ENCODE measurements at regions of chr2 and their contacts with region 1.

Region 1: DNA sequence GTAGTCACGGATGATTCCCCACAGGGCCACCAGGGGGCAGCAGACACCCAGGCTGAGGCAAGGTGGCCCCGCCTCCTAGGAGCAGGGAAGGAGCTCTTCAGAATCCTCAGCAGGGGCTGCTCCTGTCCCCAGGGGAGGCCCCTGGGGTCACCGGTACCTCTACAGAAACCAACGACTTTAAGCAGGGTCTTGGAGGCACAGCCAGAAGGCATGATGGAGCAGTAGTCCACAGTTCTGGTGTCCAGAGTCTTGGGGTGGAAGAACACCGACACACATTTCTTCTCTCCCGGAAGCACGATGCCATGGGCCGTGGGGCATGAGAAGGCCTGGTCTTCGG is 11.5 kb downstream of the CFAP65 start:
- DNase-seq: no peak
- ATAC-seq: peak; percentile 97
- H3K4me3 ChIP-seq: no peak overlapping the region
- H3K27ac ChIP-seq: no peak overlapping the region
- H3K4me1 ChIP-seq: no peaks in the 10 kb centered on the region
- H3K27me3 ChIP-seq: no peaks in the 10 kb centered on the region; a peak in 2 of 4 replicates
- CTCF ChIP-seq: peak; percentile 92 to 98 (median 93)
- EP300 ChIP-seq: no peak
- POLR2A ChIP-seq: no peak
- RAD21 ChIP-seq: peak; percentile 82

Region 2: DNA sequence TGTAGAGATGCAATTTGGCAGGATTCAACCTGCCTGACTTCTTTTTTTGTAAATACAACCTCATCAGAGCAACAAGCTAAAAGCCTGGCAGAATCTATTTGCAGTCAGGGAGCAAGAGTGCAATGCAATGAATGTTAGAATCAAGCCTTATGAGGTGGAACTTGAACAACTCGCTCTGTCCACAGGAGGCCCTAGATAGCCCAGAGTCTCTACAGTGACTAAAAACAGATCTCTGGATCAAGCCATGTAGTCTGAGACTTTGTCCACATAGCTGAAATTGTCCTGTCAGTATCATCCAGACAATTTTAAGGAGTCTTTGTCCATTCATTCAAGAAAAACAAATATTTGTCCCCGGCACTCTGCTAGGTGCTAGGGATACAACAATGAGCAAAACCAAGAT is 102.4 kb before region 1 on chr2:
- CTCF ChIA-PET with region 1: no interaction called
- POLR2A ChIA-PET with region 1: no interaction called
- RAD21 ChIA-PET with region 1: no interaction called
- SMC1A ChIA-PET with region 1: no interaction called
- in situ Hi-C with region 1: no loop called
- intact Hi-C with region 1: no loop called
- DNase-seq: no peak
- ATAC-seq: no peak
- H3K4me3 ChIP-seq: no peak overlapping the region
- H3K27ac ChIP-seq: no peak overlapping the region
- H3K4me1 ChIP-seq: no peaks in the 10 kb centered on the region
- H3K27me3 ChIP-seq: no peaks in the 10 kb centered on the region
- CTCF ChIP-seq: no peak
- EP300 ChIP-seq: no peak
- POLR2A ChIP-seq: no peak
- RAD21 ChIP-seq: no peak

Region 3: DNA sequence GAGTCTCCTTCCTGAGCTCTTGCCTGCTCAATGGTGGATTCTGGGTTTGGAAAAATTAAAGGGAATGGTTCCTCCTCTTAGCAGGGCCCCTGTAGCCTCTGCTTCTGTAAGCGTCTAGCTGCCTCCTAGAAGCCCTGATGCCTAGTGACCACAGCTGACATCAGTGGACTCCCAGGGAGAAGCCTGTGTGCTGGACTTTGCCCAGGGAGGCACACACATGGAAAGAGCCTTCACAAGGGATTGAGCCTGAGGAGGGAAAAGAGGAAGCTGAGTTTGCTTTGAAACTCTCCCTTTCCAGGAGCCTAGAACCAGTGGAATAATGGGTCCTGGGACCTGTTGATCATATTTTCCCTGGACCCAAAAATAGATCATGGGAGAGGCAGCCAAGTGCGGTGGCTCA is 13.0 kb after region 1 on chr2:
- CTCF ChIA-PET with region 1: interaction called, 16 read pairs
- POLR2A ChIA-PET with region 1: no interaction called
- RAD21 ChIA-PET with region 1: no interaction called
- SMC1A ChIA-PET with region 1: no interaction called
- in situ Hi-C with region 1: no loop called
- intact Hi-C with region 1: no loop called
- DNase-seq: no peak
- ATAC-seq: no peak
- H3K4me3 ChIP-seq: no peak overlapping the region
- H3K27ac ChIP-seq: no peak overlapping the region
- H3K4me1 ChIP-seq: no peaks in the 10 kb centered on the region
- H3K27me3 ChIP-seq: peaks cover 0 to 13% of the 10 kb centered on the region in 2 experiments; a peak in 2 of 4 replicates
- CTCF ChIP-seq: no peak
- EP300 ChIP-seq: no peak
- POLR2A ChIP-seq: no peak
- RAD21 ChIP-seq: no peak

Region 4: GRCh38 chr2:219079417-219079816 is 49.6 kb after region 1 on chr2:
- CTCF ChIA-PET with region 1: interaction called, 10 read pairs
- POLR2A ChIA-PET with region 1: no interaction called
- RAD21 ChIA-PET with region 1: no interaction called
- SMC1A ChIA-PET with region 1: no interaction called
- in situ Hi-C with region 1: no loop called
- intact Hi-C with region 1: no loop called
- DNase-seq: no peak
- ATAC-seq: no peak
- H3K4me3 ChIP-seq: no peak overlapping the region
- H3K27ac ChIP-seq: no peak overlapping the region
- H3K4me1 ChIP-seq: peaks cover 6% of the 10 kb centered on the region
- H3K27me3 ChIP-seq: no peaks in the 10 kb centered on the region
- CTCF ChIP-seq: no peak
- EP300 ChIP-seq: no peak
- POLR2A ChIP-seq: no peak
- RAD21 ChIP-seq: no peak

Region 5: DNA sequence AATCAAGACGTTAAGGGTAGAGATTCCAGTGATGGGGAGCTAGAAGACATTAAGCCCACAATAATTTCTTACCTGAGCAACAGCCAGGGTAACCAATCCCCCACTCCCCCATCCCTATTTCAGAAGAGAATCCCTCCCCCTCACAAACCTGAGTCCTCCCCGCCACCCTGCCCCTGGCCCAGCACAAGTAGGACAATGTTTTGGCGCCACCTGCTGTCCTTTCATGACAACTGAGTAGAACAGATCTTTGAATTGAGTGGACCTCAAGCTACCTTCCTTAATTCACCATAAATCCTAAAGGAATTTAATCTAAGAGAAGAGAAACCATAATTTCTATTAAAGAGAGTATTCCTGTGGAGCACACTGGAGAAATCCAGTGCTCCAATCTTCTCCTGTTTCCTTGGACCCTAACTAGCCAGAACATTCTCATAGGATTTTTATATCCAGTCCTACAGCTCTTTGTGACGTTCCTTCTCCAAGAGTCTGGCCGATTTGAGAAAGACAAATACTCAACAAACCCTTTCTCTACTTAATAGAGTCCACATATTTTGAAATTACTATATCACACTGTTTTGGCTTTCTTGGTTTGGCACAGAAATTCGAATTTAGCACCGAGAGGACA is 89.7 kb after region 1 on chr2:
- CTCF ChIA-PET with region 1: interaction called, 50 read pairs
- POLR2A ChIA-PET with region 1: no interaction called
- RAD21 ChIA-PET with region 1: interaction called, 17 read pairs
- SMC1A ChIA-PET with region 1: interaction called, 13 read pairs
- in situ Hi-C with region 1: no loop called
- intact Hi-C with region 1: loop called (anchors 1 kb)
- DNase-seq: peak; percentile 5
- ATAC-seq: peak; percentile 89
- H3K4me3 ChIP-seq: no peak overlapping the region
- H3K27ac ChIP-seq: no peak overlapping the region
- H3K4me1 ChIP-seq: no peaks in the 10 kb centered on the region
- H3K27me3 ChIP-seq: no peaks in the 10 kb centered on the region
- CTCF ChIP-seq: peak; percentile 68 to 74 (median 71)
- EP300 ChIP-seq: no peak
- POLR2A ChIP-seq: no peak
- RAD21 ChIP-seq: peak; percentile 90

Region 6: DNA sequence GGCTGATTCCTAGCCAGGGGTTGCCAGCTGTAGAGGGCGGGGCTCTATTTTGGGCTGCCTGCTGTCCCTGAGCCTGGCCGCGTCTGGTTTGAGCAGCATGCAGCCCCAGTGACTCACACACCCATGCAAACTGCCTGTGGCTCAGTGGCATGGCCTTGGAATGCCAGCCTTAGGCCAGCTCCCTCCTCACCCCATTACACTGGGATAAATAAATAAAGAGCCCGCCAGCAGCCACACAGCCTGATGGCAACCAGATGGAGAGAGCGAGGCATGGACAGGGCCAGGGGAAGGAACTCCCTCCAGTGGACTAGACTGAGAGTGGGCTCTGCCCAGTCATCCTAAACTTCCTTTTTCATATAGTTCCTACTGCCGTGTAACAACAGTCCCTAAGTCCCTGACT is 112.5 kb after region 1 on chr2:
- CTCF ChIA-PET with region 1: interaction called, 10 read pairs
- POLR2A ChIA-PET with region 1: no interaction called
- RAD21 ChIA-PET with region 1: interaction called, 4 read pairs
- SMC1A ChIA-PET with region 1: no interaction called
- in situ Hi-C with region 1: no loop called
- intact Hi-C with region 1: no loop called
- DNase-seq: no peak
- ATAC-seq: no peak
- H3K4me3 ChIP-seq: no peak overlapping the region
- H3K27ac ChIP-seq: no peak overlapping the region
- H3K4me1 ChIP-seq: no peaks in the 10 kb centered on the region
- H3K27me3 ChIP-seq: no peaks in the 10 kb centered on the region
- CTCF ChIP-seq: no peak
- EP300 ChIP-seq: no peak
- POLR2A ChIP-seq: no peak
- RAD21 ChIP-seq: no peak

Region 7: DNA sequence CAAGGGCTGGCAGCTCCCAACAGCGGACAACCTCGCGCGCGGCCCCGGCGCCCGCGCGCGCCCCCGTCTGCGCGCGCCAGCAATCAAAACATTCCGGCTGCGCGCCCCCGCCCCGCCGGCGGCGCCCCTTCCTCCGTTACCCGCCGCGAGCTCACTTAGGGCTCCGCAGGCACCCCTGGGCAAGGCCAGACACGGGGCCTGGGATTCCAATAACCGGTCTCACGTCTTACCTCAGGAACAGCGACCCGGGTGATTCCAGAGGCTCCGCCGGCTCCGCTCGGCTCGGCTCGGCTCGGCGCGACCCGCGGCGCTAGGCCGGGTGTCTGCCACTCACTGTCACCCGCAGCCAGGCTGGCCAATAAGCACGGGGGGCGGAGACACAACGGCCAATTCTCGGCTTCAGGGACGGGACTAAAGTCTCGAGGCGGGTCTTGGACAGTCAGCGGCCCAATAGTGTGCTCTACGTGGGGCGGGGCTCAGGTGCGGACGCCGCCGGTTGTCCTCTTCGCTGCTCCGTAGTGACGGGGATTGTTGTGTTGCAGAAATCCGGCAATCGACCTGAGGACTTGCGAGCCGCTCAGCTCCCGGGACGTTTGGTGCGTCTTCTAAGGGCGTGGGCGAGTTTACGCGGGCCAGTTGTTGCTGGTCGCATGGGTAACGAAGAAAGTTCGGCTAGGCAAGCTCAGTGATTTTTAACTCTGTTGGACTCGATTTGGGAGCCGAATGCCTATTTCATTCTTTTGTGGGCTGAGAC is 199.7 kb after region 1 on chr2 and contains the starts of genes ANKZF1 and ATG9A:
- CTCF ChIA-PET with region 1: no interaction called
- POLR2A ChIA-PET with region 1: no interaction called
- RAD21 ChIA-PET with region 1: no interaction called
- SMC1A ChIA-PET with region 1: no interaction called
- in situ Hi-C with region 1: no loop called
- intact Hi-C with region 1: no loop called
- DNase-seq: peak; percentile 94
- ATAC-seq: peak; percentile 99
- H3K4me3 ChIP-seq: peak within 1 kb of the TSS; percentile 97
- H3K27ac ChIP-seq: peak within 1 kb of the TSS; percentile 87
- H3K4me1 ChIP-seq: peaks cover 15% of the 10 kb centered on the region
- H3K27me3 ChIP-seq: no peaks in the 10 kb centered on the region
- CTCF ChIP-seq: no peak
- EP300 ChIP-seq: no peak
- POLR2A ChIP-seq: peak; percentile 90
- RAD21 ChIP-seq: no peak
- polyA plus RNA-seq, gene ANKZF1: 3.1 to 5.0 TPM
- polyA plus RNA-seq, gene ATG9A: 0.16 TPM in 1 of 2 experiments, not detected in the other

Measured in GM12878 (cell line).